Stomach (tissue), 19 donors: ENCODE measurements at regions of chr7 and their contacts with region 1.

Region 1: GRCh38 chr7:33757562-33758165 is 147.7 kb upstream of the BMPER start:
- DNase-seq: peak; percentile 55 to 61
- H3K4me3 ChIP-seq: no peak overlapping the region
- H3K27ac ChIP-seq: peak overlapping the region in 1 of 5 donors; percentile 35
- H3K4me1 ChIP-seq: peaks cover 0 to 24% (median 5%) of the 10 kb centered on the region in 4 donors
- H3K27me3 ChIP-seq: no peaks in the 10 kb centered on the region
- CTCF ChIP-seq: peak in 5 of 7 experiments; percentile 45 to 92 (median 70)
- EP300 ChIP-seq: no peak
- POLR2A ChIP-seq: no peak

Region 2: DNA sequence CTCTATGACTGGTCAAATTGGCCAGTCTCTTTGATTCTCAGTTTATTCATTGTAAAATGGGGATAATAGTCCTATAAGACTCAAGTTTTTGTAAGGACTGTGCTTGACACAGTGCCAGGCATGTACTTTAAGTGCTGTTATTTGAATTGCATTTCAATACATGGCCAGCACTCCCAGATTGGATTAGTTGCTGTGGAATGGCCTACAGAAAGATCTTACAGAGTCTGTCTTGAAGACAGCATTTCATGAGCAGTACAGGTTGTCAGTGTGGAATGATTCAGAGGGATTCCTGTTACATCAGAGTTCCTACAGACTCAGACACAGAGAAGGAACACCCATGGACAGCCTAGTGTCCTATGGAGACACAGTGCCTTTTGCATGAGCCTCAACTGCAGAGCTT is 90.5 kb before region 1 on chr7:
- intact Hi-C with region 1: no loop called
- DNase-seq: peak in 1 of 2 donors; percentile 5
- H3K4me3 ChIP-seq: no peak overlapping the region
- H3K27ac ChIP-seq: no peak overlapping the region
- H3K4me1 ChIP-seq: peaks cover 0 to 8% (median 4%) of the 10 kb centered on the region in 4 donors
- H3K27me3 ChIP-seq: no peaks in the 10 kb centered on the region
- CTCF ChIP-seq: no peak
- EP300 ChIP-seq: no peak
- POLR2A ChIP-seq: no peak

Region 3: GRCh38 chr7:33895025-33895804 is 137.6 kb after region 1 on chr7:
- intact Hi-C with region 1: loop called (anchors 10 kb)
- DNase-seq: peak; percentile 90 to 93
- H3K4me3 ChIP-seq: no peak overlapping the region
- H3K27ac ChIP-seq: no peak overlapping the region
- H3K4me1 ChIP-seq: peaks cover 5 to 27% (median 10%) of the 10 kb centered on the region in 4 donors
- H3K27me3 ChIP-seq: no peaks in the 10 kb centered on the region
- CTCF ChIP-seq: peak in 5 of 7 experiments; percentile 82 to 91 (median 84)
- EP300 ChIP-seq: no peak
- POLR2A ChIP-seq: no peak

Region 4: GRCh38 chr7:33921216-33921938 is 163.7 kb after region 1 on chr7:
- intact Hi-C with region 1: loop called (anchors 10 kb)
- DNase-seq: peak; percentile 20 to 35
- H3K4me3 ChIP-seq: no peak overlapping the region
- H3K27ac ChIP-seq: peak overlapping the region; percentile 52 to 74 (median 56)
- H3K4me1 ChIP-seq: peaks cover 0 to 22% (median 3%) of the 10 kb centered on the region in 4 donors
- H3K27me3 ChIP-seq: no peaks in the 10 kb centered on the region
- CTCF ChIP-seq: no peak
- EP300 ChIP-seq: no peak
- POLR2A ChIP-seq: no peak

Region 5: GRCh38 chr7:33946094-33946700 is 188.5 kb after region 1 on chr7:
- intact Hi-C with region 1: no loop called
- DNase-seq: no peak
- H3K4me3 ChIP-seq: no peak overlapping the region
- H3K27ac ChIP-seq: no peak overlapping the region
- H3K4me1 ChIP-seq: peaks cover 0 to 8% (median 0%) of the 10 kb centered on the region in 4 donors
- H3K27me3 ChIP-seq: no peaks in the 10 kb centered on the region
- CTCF ChIP-seq: no peak
- EP300 ChIP-seq: no peak
- POLR2A ChIP-seq: no peak